ENCODE measurements at regions of chr2 and their contacts with region 1.

Region 1: DNA sequence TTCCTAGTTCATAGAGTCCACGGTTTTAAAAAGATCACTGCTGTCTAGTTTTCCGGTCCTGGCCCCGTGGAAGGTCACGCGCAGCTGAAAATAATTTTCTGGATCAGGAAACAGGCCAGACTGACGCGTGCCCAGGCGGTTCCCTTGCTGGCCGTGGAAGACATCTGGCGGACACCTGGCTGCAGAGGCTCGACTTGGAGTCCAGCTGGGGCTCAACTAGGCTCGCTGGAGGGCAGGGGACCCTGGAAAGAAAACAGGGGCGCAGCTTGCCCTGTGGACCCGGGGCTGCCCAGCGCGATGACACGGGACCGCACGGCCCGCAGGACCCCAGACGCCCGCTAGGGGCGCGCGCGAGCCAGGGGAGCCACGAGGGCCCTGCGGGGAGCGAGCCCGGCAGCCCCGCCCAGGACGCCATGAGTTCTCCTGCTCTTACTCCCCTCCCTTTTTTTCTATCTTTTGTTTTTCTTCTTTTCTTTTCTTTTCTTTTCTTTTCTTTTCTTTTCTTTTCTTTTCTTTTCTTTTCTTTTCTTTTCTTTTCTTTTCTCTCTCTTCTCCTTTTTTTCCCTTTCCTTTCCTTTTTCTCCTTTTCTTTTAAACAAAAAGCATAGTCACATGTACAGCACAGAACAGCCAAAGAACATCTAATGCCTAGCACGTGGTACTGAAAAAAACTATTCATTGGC is 43.2 kb upstream of the UBE2F start:
- DNase-seq: peak; percentile 85
- ATAC-seq: peak; percentile 100
- H3K4me3 Mint-ChIP-seq: peak overlapping the region; percentile 44
- H3K27ac Mint-ChIP-seq: peak overlapping the region; percentile 69
- H3K4me1 Mint-ChIP-seq: peaks cover 27% of the 10 kb centered on the region
- H3K27me3 Mint-ChIP-seq: peaks cover 6% of the 10 kb centered on the region
- CTCF ChIP-seq: peak; percentile 98

Region 2: GRCh38 chr2:237939227-237939626 is 15.6 kb after region 1 on chr2:
- CTCF ChIA-PET with region 1: interaction called, 11 read pairs
- POLR2A ChIA-PET with region 1: interaction called, 7 read pairs
- intact Hi-C with region 1: no loop called
- DNase-seq: no peak
- ATAC-seq: no peak
- H3K4me3 Mint-ChIP-seq: no peak overlapping the region
- H3K27ac Mint-ChIP-seq: peak overlapping the region; percentile 22
- H3K4me1 Mint-ChIP-seq: peaks cover 37% of the 10 kb centered on the region
- H3K27me3 Mint-ChIP-seq: no peaks in the 10 kb centered on the region
- CTCF ChIP-seq: no peak

Region 3: GRCh38 chr2:238009563-238009962 is 85.9 kb after region 1 on chr2:
- CTCF ChIA-PET with region 1: interaction called, 3 read pairs
- POLR2A ChIA-PET with region 1: interaction called, 3 read pairs
- intact Hi-C with region 1: loop called (anchors 10 kb)
- DNase-seq: no peak
- ATAC-seq: peak; percentile 68
- H3K4me3 Mint-ChIP-seq: peak overlapping the region; percentile 46
- H3K27ac Mint-ChIP-seq: peak overlapping the region; percentile 93
- H3K4me1 Mint-ChIP-seq: peaks cover 57% of the 10 kb centered on the region
- H3K27me3 Mint-ChIP-seq: no peaks in the 10 kb centered on the region
- CTCF ChIP-seq: no peak

Measured in activated CD8-positive, alpha-beta T cell treated with anti-CD3 and anti-CD28 coated beads for 36 hours (primary cell).